Mammary epithelial cell (primary cell): ENCODE measurements at regions of chr10 and their contacts with region 1.

Region 1: GRCh38 chr10:69716711-69717560 is 84.8 kb upstream of the COL13A1 start:
- DNase-seq: peak; percentile 46
- H3K4me3 ChIP-seq: no peak overlapping the region
- H3K27ac ChIP-seq: no peak overlapping the region
- H3K4me1 ChIP-seq: peaks cover 3% of the 10 kb centered on the region
- H3K27me3 ChIP-seq: no peaks in the 10 kb centered on the region
- CTCF ChIP-seq: peak; percentile 85 to 88

Region 2: GRCh38 chr10:69425511-69426298 is 291.2 kb before region 1 on chr10:
- CTCF ChIA-PET with region 1: no interaction called
- dilution Hi-C with region 1: no loop called
- in situ Hi-C with region 1: no loop called
- intact Hi-C with region 1: loop called (anchors 10 kb)
- DNase-seq: peak; percentile 75
- H3K4me3 ChIP-seq: no peak overlapping the region
- H3K27ac ChIP-seq: no peak overlapping the region
- H3K4me1 ChIP-seq: peaks cover 14% of the 10 kb centered on the region
- H3K27me3 ChIP-seq: no peaks in the 10 kb centered on the region
- CTCF ChIP-seq: no peak

Region 3: GRCh38 chr10:69515699-69516259 is 201.2 kb before region 1 on chr10:
- CTCF ChIA-PET with region 1: interaction called, 4 read pairs
- dilution Hi-C with region 1: no loop called
- in situ Hi-C with region 1: no loop called
- intact Hi-C with region 1: loop called (anchors 1 kb)
- DNase-seq: peak; percentile 53
- H3K4me3 ChIP-seq: no peak overlapping the region
- H3K27ac ChIP-seq: no peak overlapping the region
- H3K4me1 ChIP-seq: no peaks in the 10 kb centered on the region
- H3K27me3 ChIP-seq: peaks cover 2% of the 10 kb centered on the region
- CTCF ChIP-seq: peak; percentile 94 to 96

Region 4: GRCh38 chr10:69644658-69645295 is 72.2 kb before region 1 on chr10:
- CTCF ChIA-PET with region 1: interaction called, 9 read pairs
- dilution Hi-C with region 1: no loop called
- in situ Hi-C with region 1: loop called in 1 of 2 experiments (anchors 5 kb)
- intact Hi-C with region 1: loop called (anchors 1 kb)
- DNase-seq: peak; percentile 52
- H3K4me3 ChIP-seq: no peak overlapping the region
- H3K27ac ChIP-seq: no peak overlapping the region
- H3K4me1 ChIP-seq: peaks cover 28% of the 10 kb centered on the region
- H3K27me3 ChIP-seq: no peaks in the 10 kb centered on the region
- CTCF ChIP-seq: peak; percentile 78 to 88

Region 5: DNA sequence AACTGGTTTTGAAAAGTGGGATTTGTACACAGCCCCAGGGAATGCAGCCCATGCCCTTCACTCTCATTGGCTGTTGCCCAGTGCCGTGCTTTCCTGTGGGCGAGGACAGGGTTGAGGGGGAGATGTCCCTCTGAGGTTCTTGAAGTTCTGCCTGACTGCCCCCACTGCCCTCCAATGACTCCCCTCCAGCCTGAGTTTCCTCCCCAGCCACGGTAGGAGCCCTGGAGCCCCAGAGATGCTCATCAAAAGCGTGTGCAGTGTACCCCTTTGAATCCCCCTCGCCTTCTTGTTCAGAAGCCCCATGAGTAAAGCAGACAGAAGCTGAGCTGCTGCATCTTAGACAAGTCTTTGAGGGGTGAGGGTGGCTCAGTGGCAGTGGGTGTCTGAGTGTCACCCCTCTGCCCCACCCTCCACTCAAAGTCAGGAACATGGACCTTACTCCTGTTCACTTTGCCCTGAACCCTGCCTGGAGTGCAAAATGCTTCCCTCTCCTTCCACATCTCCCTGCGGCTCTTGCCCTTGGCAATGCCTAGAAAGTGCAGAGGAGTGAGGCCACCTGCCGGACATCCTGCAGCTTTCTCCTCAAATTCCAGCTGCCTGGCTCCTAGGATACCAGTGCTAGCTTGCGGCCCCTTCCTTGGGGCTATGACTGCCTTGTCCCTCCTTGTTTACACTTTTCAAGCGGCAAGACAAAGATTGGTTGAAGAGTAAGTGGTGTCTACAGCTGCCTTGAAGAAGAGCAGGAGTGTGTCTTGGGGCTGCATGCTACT is 67.0 kb before region 1 on chr10:
- CTCF ChIA-PET with region 1: interaction called, 6 read pairs
- dilution Hi-C with region 1: loop called (anchors 5 kb)
- in situ Hi-C with region 1: loop called in 1 of 2 experiments (anchors 5 kb)
- intact Hi-C with region 1: no loop called
- DNase-seq: no peak
- H3K4me3 ChIP-seq: no peak overlapping the region
- H3K27ac ChIP-seq: no peak overlapping the region
- H3K4me1 ChIP-seq: peaks cover under 1% of the 10 kb centered on the region
- H3K27me3 ChIP-seq: no peaks in the 10 kb centered on the region
- CTCF ChIP-seq: peak in 1 of 2 donors; percentile 11

Region 6: DNA sequence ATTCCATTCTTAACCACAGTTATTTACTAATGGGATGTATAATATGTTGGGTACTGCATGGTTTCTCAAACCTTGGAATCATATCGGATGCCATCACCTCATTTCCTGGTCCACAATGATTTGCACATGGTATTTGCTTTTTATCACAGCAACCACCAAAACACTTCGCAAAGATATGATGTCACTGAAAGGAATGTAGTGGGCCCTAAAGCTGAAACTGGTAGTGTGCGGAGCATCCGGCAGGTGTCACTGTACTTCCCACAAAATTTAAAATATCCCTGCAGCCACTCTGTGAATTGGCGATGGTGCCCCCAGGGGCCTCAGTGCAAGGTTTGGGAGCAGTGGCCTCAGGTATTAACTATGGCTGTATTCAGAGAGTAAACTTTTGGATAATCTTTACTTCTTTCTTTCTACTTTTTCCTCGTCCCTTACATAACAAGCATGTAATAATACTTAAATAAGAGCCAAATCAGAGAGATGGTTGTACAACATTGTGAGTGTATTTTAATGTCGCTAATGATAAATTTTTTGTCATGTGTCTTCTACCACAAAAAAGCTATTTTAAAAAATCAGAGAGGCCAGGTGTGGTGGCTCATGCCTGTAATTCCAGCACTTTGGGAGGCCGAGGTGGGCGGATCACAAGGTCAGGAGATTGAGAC is 20.7 kb before region 1 on chr10:
- CTCF ChIA-PET with region 1: interaction called, 4 read pairs
- dilution Hi-C with region 1: no loop called
- in situ Hi-C with region 1: no loop called
- intact Hi-C with region 1: loop called (anchors 1 kb)
- DNase-seq: peak; percentile 87
- H3K4me3 ChIP-seq: no peak overlapping the region
- H3K27ac ChIP-seq: peak overlapping the region; percentile 49
- H3K4me1 ChIP-seq: no peaks in the 10 kb centered on the region
- H3K27me3 ChIP-seq: peaks cover 4% of the 10 kb centered on the region
- CTCF ChIP-seq: peak; percentile 69 to 72

Region 7: DNA sequence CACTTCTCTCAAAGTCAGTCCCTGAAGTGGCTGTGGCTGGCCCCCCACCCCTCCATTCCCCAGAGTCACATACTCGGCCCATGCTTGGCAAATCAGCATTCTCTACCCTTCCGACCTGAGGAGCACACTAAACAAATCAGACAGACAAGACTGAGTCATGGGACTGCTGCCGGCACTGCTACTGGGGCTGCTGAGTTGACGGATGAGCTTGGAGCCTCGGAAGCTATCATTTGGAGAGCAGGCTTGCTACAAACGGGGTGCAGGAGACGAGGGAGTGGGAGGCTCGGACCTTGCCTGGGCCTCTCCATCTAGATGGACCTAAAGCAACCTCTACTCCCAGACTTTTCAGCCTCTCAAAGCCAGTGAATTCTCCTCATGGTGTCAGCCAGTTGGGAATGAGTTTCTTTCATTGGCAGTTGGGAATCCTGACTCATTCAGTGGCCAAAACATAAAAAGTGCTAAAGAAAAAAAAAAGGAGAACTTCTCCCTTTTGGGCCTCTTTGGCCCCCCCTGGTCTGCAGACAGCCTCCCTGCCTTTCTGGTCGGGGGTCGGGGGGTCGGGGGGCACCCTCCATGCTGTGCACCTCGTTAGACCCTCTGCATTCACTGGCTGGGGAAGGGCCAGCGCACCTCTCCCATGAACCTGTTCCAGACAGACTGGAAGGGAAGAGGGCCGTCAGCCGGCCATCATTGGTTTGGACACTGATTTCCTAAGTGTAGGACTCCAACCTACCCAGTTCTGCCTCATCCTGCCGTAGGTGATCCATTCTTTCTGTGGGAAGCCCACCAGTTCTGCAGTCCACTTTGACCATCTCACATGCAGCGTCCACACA is 32.5 kb after region 1 on chr10:
- CTCF ChIA-PET with region 1: no interaction called
- dilution Hi-C with region 1: no loop called
- in situ Hi-C with region 1: no loop called
- intact Hi-C with region 1: no loop called
- DNase-seq: no peak
- H3K4me3 ChIP-seq: no peak overlapping the region
- H3K27ac ChIP-seq: no peak overlapping the region
- H3K4me1 ChIP-seq: no peaks in the 10 kb centered on the region
- H3K27me3 ChIP-seq: peaks cover 2% of the 10 kb centered on the region
- CTCF ChIP-seq: no peak